ENCODE measurements at regions of chr16 and their contacts with region 1.

Region 1: GRCh38 chr16:69286941-69287713 is 24.0 kb upstream of the VPS4A start:
- DNase-seq: no peak
- H3K4me3 ChIP-seq: no peak overlapping the region
- H3K27ac ChIP-seq: peak overlapping the region in 1 of 4 donors; percentile 32
- H3K4me1 ChIP-seq: peaks cover 12 to 14% (median 13%) of the 10 kb centered on the region in 4 donors
- H3K27me3 ChIP-seq: no peaks in the 10 kb centered on the region
- CTCF ChIP-seq: peak; percentile 61 to 70 (median 65)
- EP300 ChIP-seq: no peak
- POLR2A ChIP-seq: no peak

Region 2: GRCh38 chr16:69116906-69117305 is 170.2 kb before region 1 on chr16:
- intact Hi-C with region 1: no loop called
- DNase-seq: no peak
- H3K4me3 ChIP-seq: no peak overlapping the region
- H3K27ac ChIP-seq: peak overlapping the region in 1 of 4 donors; percentile 8
- H3K4me1 ChIP-seq: peaks cover 6 to 41% (median 21%) of the 10 kb centered on the region in 4 donors
- H3K27me3 ChIP-seq: no peaks in the 10 kb centered on the region
- CTCF ChIP-seq: no peak
- EP300 ChIP-seq: no peak
- POLR2A ChIP-seq: no peak

Region 3: GRCh38 chr16:69150146-69150865 is 136.8 kb before region 1 on chr16:
- intact Hi-C with region 1: loop called (anchors 1 kb)
- DNase-seq: no peak
- H3K4me3 ChIP-seq: no peak overlapping the region
- H3K27ac ChIP-seq: no peak overlapping the region
- H3K4me1 ChIP-seq: no peaks in the 10 kb centered on the region
- H3K27me3 ChIP-seq: no peaks in the 10 kb centered on the region
- CTCF ChIP-seq: peak; percentile 68 to 86 (median 79)
- EP300 ChIP-seq: no peak
- POLR2A ChIP-seq: no peak

Region 4: GRCh38 chr16:69820926-69821541 is 533.9 kb after region 1 on chr16:
- intact Hi-C with region 1: no loop called
- DNase-seq: no peak
- H3K4me3 ChIP-seq: peak overlapping the region in 3 of 4 donors; percentile 15 to 27 (median 27)
- H3K27ac ChIP-seq: peak overlapping the region; percentile 20 to 74 (median 67)
- H3K4me1 ChIP-seq: peaks cover 16 to 39% (median 20%) of the 10 kb centered on the region in 4 donors
- H3K27me3 ChIP-seq: no peaks in the 10 kb centered on the region
- CTCF ChIP-seq: no peak
- EP300 ChIP-seq: no peak
- POLR2A ChIP-seq: no peak

Measured in esophagus muscularis mucosa (tissue), 4 donors.